ENCODE measurements at regions of chr1 and their contacts with region 1.

Region 1: GRCh38 chr1:205983925-205984725 is 19.1 kb downstream of the RAB7B start:
- DNase-seq: peak; percentile 42 to 70 (median 57)
- H3K4me3 ChIP-seq: no peak overlapping the region
- H3K27ac ChIP-seq: no peak overlapping the region
- H3K4me1 ChIP-seq: peaks cover 2% of the 10 kb centered on the region
- H3K27me3 ChIP-seq: no peaks in the 10 kb centered on the region
- CTCF ChIP-seq: peak in 1 of 3 donors; percentile 30
- EP300 ChIP-seq: no peak
- POLR2A ChIP-seq: no peak

Region 2: DNA sequence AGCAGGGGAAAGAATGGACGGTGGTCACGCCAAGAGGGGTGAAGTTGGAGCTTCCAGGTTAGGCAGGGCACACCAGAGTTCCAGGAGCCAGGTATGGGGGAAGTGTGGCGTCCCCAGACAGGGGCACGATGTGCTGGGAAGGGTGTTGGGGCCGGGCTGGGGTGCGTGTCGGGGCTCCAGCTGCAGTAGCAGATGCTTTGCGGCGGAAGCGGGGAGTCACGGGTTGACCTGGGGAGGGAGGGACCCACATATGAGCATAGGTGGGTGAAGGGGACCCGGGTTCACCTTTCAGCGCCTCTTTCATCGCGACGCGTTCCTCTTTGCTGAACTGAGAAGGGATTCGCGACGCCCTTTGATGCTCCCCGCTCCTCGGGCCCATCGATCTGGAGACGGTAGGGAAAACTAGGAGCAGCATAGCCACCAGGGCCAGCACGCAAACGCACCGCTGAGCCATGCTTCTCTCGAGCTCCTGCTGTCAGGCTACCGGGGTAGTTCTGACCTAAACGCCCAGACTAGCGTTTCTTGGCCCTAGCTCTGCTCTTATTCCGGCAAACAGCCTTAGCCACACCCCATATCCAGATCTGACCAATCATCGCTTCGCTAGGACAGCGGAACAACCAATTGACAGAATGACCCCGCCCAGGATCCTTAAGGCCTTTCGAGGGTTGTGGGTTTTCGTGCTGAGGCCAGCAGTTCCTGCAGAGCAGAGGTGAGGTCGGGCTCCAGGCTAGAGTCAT is 134.3 kb before region 1 on chr1 and contains the start of gene PM20D1:
- intact Hi-C with region 1: no loop called
- DNase-seq: peak; percentile 73 to 86 (median 81)
- H3K4me3 ChIP-seq: peak within 1 kb of the TSS; percentile 19
- H3K27ac ChIP-seq: no peak within 1 kb of the TSS
- H3K4me1 ChIP-seq: no peaks in the 10 kb centered on the region
- H3K27me3 ChIP-seq: no peaks in the 10 kb centered on the region
- CTCF ChIP-seq: no peak
- EP300 ChIP-seq: no peak
- POLR2A ChIP-seq: no peak
- total RNA-seq, gene PM20D1: 0.43 to 1.4 (median 0.74) TPM in 6 of 7 donors, not detected in the other

Region 3: GRCh38 chr1:206106328-206107167 is 122.4 kb after region 1 on chr1:
- intact Hi-C with region 1: loop called (anchors 5 kb)
- DNase-seq: peak; percentile 67 to 86 (median 81)
- H3K4me3 ChIP-seq: no peak overlapping the region
- H3K27ac ChIP-seq: no peak overlapping the region
- H3K4me1 ChIP-seq: peaks cover 2% of the 10 kb centered on the region
- H3K27me3 ChIP-seq: no peaks in the 10 kb centered on the region
- CTCF ChIP-seq: peak; percentile 65 to 76 (median 74)
- EP300 ChIP-seq: no peak
- POLR2A ChIP-seq: no peak

Region 4: GRCh38 chr1:206133751-206134415 is 149.8 kb after region 1 on chr1:
- intact Hi-C with region 1: no loop called
- DNase-seq: no peak
- H3K4me3 ChIP-seq: no peak overlapping the region
- H3K27ac ChIP-seq: no peak overlapping the region
- H3K4me1 ChIP-seq: no peaks in the 10 kb centered on the region
- H3K27me3 ChIP-seq: no peaks in the 10 kb centered on the region
- CTCF ChIP-seq: no peak
- EP300 ChIP-seq: no peak
- POLR2A ChIP-seq: no peak

Measured in ovary (tissue), 10 donors.